Activated CD8-positive, alpha-beta T cell treated with anti-CD3 and anti-CD28 coated beads for 36 hours (primary cell): ENCODE measurements at regions of chr2 and their contacts with region 1.

Region 1: DNA sequence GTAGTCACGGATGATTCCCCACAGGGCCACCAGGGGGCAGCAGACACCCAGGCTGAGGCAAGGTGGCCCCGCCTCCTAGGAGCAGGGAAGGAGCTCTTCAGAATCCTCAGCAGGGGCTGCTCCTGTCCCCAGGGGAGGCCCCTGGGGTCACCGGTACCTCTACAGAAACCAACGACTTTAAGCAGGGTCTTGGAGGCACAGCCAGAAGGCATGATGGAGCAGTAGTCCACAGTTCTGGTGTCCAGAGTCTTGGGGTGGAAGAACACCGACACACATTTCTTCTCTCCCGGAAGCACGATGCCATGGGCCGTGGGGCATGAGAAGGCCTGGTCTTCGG is 11.5 kb downstream of the CFAP65 start:
- DNase-seq: peak; percentile 86
- ATAC-seq: peak; percentile 95
- H3K4me3 Mint-ChIP-seq: no peak overlapping the region
- H3K27ac Mint-ChIP-seq: no peak overlapping the region
- H3K4me1 Mint-ChIP-seq: no peaks in the 10 kb centered on the region
- H3K27me3 Mint-ChIP-seq: peaks cover 14% of the 10 kb centered on the region
- CTCF ChIP-seq: peak; percentile 92

Region 2: DNA sequence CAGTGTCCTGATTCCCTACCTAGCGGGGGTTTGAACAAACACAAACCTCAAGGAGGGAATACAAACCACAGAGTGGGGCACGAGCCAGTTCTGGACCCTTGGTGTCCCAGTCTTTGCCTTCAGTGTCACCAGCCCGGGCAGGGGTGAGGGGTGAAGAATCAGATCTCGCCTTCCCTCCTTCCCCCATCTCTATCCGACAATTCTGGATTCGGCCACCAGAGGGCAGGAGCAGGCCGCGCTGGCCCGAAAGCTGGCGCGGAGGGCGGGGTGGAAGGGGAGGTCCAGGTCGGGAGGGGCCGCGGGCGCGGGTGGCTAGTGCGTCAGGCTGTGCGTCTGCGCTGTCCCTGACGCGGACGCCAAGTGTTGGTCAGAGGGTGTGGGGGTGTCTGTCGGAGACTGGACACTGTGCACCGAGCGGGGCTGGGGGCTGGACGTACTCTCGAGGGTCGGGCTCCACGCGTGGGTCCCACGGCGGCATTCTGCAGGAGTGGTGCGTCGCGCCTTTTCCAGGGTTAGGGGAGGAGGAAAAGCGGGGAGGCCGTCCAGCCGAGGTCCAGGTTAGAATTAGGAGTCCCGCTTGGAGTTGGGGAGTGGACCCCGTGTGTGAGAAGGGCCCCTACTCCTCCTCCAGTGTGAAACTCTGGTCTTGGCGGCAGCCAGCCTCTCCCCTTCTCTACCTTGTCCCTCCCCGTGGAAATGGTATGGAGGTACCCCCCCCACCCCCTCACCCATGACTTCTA is 33.7 kb before region 1 on chr2:
- CTCF ChIA-PET with region 1: interaction called, 31 read pairs
- POLR2A ChIA-PET with region 1: no interaction called
- intact Hi-C with region 1: no loop called
- DNase-seq: peak; percentile 90
- ATAC-seq: peak; percentile 91
- H3K4me3 Mint-ChIP-seq: no peak overlapping the region
- H3K27ac Mint-ChIP-seq: no peak overlapping the region
- H3K4me1 Mint-ChIP-seq: peaks cover 4% of the 10 kb centered on the region
- H3K27me3 Mint-ChIP-seq: peaks cover 75% of the 10 kb centered on the region
- CTCF ChIP-seq: peak; percentile 93

Region 3: GRCh38 chr2:219010162-219010756 is 19.5 kb before region 1 on chr2:
- CTCF ChIA-PET with region 1: interaction called, 17 read pairs
- POLR2A ChIA-PET with region 1: no interaction called
- intact Hi-C with region 1: no loop called
- DNase-seq: peak; percentile 58
- ATAC-seq: peak; percentile 80
- H3K4me3 Mint-ChIP-seq: no peak overlapping the region
- H3K27ac Mint-ChIP-seq: no peak overlapping the region
- H3K4me1 Mint-ChIP-seq: no peaks in the 10 kb centered on the region
- H3K27me3 Mint-ChIP-seq: peaks cover 18% of the 10 kb centered on the region
- CTCF ChIP-seq: peak; percentile 46

Region 4: DNA sequence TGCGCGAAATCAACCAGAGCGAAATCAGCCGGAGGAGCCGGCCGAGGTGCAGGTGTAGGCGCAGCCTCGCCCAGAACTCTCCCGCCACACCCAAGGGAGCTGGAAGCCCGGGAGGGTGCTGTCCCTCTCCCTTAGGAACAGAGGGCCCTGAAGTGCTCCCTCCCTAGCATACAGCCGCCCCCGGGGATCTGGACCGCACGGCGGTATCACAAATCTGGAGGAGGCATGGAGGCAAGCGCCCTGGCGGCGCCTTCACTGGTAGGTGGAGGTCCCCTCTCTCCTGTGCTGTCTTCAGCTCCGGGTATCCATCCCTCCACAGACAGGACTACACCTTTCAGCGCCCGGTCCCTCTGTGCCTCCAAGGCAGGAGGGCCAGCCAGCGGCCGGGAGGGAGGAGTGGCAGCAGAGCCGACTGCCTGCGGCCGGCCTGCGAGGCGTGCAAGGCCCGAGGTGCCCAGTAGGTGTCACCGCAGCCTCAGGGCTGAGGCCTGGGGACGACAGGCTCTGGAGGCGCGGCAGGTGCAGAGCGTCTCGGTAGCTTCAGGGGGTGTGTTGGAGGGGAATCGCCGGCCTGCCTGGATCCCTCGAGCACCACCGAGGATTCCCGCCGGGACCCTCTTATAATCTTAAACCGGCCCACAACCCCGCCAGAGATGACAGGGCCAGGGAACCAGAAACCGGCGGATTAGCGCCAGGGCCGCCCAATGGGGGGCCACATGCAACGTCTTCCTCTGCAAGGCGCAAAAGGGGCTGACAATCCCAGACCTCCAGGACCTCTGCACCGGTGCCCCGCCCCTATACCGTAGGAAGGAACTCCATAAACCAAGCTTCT is 28.1 kb after region 1 on chr2:
- CTCF ChIA-PET with region 1: interaction called, 15 read pairs
- POLR2A ChIA-PET with region 1: no interaction called
- intact Hi-C with region 1: no loop called
- DNase-seq: peak; percentile 84
- ATAC-seq: peak; percentile 97
- H3K4me3 Mint-ChIP-seq: peak overlapping the region; percentile 36
- H3K27ac Mint-ChIP-seq: no peak overlapping the region
- H3K4me1 Mint-ChIP-seq: peaks cover 19% of the 10 kb centered on the region
- H3K27me3 Mint-ChIP-seq: peaks cover 60% of the 10 kb centered on the region
- CTCF ChIP-seq: peak; percentile 97

Region 5: GRCh38 chr2:219073413-219074129 is 43.8 kb after region 1 on chr2:
- CTCF ChIA-PET with region 1: interaction called, 15 read pairs
- POLR2A ChIA-PET with region 1: no interaction called
- intact Hi-C with region 1: no loop called
- DNase-seq: peak; percentile 43
- ATAC-seq: no peak
- H3K4me3 Mint-ChIP-seq: no peak overlapping the region
- H3K27ac Mint-ChIP-seq: no peak overlapping the region
- H3K4me1 Mint-ChIP-seq: no peaks in the 10 kb centered on the region
- H3K27me3 Mint-ChIP-seq: no peaks in the 10 kb centered on the region
- CTCF ChIP-seq: peak; percentile 63

Region 6: DNA sequence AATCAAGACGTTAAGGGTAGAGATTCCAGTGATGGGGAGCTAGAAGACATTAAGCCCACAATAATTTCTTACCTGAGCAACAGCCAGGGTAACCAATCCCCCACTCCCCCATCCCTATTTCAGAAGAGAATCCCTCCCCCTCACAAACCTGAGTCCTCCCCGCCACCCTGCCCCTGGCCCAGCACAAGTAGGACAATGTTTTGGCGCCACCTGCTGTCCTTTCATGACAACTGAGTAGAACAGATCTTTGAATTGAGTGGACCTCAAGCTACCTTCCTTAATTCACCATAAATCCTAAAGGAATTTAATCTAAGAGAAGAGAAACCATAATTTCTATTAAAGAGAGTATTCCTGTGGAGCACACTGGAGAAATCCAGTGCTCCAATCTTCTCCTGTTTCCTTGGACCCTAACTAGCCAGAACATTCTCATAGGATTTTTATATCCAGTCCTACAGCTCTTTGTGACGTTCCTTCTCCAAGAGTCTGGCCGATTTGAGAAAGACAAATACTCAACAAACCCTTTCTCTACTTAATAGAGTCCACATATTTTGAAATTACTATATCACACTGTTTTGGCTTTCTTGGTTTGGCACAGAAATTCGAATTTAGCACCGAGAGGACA is 89.7 kb after region 1 on chr2:
- CTCF ChIA-PET with region 1: interaction called, 20 read pairs
- POLR2A ChIA-PET with region 1: no interaction called
- intact Hi-C with region 1: no loop called
- DNase-seq: peak; percentile 80
- ATAC-seq: peak; percentile 78
- H3K4me3 Mint-ChIP-seq: no peak overlapping the region
- H3K27ac Mint-ChIP-seq: no peak overlapping the region
- H3K4me1 Mint-ChIP-seq: peaks cover 11% of the 10 kb centered on the region
- H3K27me3 Mint-ChIP-seq: no peaks in the 10 kb centered on the region
- CTCF ChIP-seq: peak; percentile 73

Region 7: DNA sequence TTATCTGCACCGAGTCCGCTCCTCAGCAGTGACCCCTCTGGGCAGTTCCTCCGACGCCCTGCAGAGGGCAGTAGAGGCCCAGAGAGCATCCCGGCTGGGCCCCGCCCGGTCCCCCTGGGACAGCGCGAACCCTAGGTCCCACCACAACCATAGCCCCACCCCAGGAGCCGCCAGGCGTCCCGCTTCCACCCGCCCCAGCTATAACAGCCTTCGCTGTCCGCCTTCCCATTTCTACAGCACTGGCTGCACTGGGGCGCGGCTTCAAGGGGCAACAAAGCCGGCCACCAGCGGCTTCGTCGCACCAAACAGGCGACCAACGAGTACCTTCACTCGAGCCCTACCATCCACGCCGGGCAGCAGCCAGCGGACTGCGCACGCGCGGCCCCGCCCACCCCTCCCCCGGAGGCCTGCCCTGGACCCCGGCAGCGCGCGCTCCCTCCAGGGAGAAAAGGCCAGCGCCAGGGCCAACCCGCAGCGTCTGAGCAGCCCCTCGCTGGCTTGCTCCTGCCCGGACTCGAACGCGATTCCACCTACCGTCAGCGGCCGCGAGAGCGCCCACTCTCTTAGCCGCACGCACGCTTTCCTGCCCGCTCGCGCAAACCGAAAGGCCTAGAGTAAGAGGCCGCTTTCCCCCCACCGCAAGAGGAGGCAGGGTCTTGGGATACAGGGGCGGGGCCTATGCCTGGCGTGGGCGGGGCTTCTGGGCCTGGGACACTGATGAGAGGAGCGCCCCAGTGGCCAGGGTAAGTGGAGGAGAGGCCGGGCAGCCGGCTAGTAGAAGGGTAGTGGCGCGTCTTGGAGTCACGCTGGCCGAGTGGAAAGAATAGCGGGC is 130.6 kb after region 1 on chr2 and contains the start of gene NHEJ1:
- CTCF ChIA-PET with region 1: interaction called, 135 read pairs
- POLR2A ChIA-PET with region 1: no interaction called
- intact Hi-C with region 1: no loop called
- DNase-seq: peak; percentile 98
- ATAC-seq: peak; percentile 92
- H3K4me3 Mint-ChIP-seq: peak within 1 kb of the TSS; percentile 85
- H3K27ac Mint-ChIP-seq: peak within 1 kb of the TSS; percentile 93
- H3K4me1 Mint-ChIP-seq: peaks cover 18% of the 10 kb centered on the region
- H3K27me3 Mint-ChIP-seq: no peaks in the 10 kb centered on the region
- CTCF ChIP-seq: peak; percentile 99
- total RNA-seq, gene NHEJ1: 22.4 to 26.3 TPM